K562 (cell line): ENCODE measurements at regions of chr14 and their contacts with region 1.

Region 1: DNA sequence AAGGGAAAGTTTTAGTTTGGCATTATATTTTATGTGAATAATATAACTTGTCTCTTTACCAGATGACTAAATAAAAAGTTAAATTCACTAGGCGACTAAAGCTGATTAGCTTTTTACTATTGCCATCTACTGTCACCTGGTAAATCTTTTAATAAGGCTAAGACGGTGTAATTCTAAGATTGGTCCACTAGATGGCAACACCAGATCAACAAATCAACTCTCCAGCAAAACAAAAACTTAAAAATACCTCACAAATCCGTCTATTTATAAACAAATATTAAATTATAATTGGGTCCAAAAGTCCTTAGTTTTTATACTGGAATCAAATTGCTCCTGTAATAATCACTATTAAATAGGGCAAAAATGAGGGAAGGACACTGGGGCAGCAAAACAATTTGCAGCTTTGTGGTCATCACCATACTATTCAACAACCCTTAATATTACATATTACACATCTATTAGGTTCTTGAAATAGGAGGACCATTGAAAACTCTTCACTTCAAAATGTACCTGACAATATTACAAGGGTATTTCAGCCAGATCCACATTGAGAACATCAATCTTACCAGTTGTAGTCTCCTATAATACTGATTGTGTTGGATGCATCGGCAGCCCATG is 47.9 kb downstream of the GALC start:
- DNase-seq: peak; percentile 12 to 55 (median 17)
- ATAC-seq: no peak
- H3K4me3 ChIP-seq: no peak overlapping the region
- H3K27ac ChIP-seq: no peak overlapping the region
- H3K4me1 ChIP-seq: no peaks in the 10 kb centered on the region
- H3K27me3 ChIP-seq: no peaks in the 10 kb centered on the region
- CTCF ChIP-seq: peak; percentile 26 to 66 (median 41); a peak in 3 of 6 replicates
- EP300 ChIP-seq: no peak
- POLR2A ChIP-seq: no peak
- RAD21 ChIP-seq: peak; percentile 70 to 72

Region 2: DNA sequence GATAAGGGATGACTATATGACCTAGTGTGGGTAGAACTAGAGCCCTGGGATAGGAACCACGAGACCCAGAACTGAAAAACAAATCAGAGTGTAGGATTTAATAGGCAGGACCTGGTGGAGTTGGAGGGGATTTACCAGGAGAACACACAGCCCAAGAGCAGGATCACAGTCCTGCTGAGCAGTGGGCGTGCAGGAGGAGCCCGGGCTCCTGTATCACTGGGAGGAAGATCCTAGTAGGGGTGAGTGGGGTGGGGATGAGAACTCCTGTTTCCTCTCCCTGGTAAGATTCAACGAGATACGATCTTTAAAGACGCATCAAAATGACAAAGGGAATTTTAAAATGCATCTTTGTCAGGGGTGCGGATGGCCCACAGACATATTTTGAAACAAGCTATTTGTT is 172.2 kb before region 1 on chr14:
- CTCF ChIA-PET with region 1: no interaction called
- POLR2A ChIA-PET with region 1: no interaction called
- in situ Hi-C with region 1: no loop called
- intact Hi-C with region 1: no loop called
- DNase-seq: no peak
- ATAC-seq: no peak
- H3K4me3 ChIP-seq: no peak overlapping the region
- H3K27ac ChIP-seq: no peak overlapping the region
- H3K4me1 ChIP-seq: no peaks in the 10 kb centered on the region
- H3K27me3 ChIP-seq: no peaks in the 10 kb centered on the region
- CTCF ChIP-seq: no peak
- EP300 ChIP-seq: no peak
- POLR2A ChIP-seq: no peak
- RAD21 ChIP-seq: no peak

Region 3: DNA sequence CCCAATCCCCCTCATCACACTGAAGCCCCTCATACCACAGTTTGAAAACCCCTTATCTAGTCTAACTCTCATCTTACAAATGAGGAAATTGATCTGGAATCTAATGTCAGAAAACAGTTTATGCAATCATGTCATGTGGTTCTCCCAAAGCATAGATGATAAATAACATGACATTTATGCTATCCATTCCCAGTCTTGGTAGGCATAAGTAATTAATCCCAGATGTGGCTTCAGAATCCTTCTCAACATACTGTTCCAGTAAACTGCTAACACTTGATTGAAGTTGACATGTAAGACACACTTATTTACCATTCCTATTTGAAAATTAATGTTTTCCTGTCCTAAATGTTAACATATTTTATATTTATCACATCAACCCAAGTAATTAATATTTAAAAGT is 120.8 kb before region 1 on chr14:
- CTCF ChIA-PET with region 1: no interaction called
- POLR2A ChIA-PET with region 1: no interaction called
- in situ Hi-C with region 1: no loop called
- intact Hi-C with region 1: no loop called
- DNase-seq: no peak
- ATAC-seq: no peak
- H3K4me3 ChIP-seq: no peak overlapping the region
- H3K27ac ChIP-seq: no peak overlapping the region
- H3K4me1 ChIP-seq: no peaks in the 10 kb centered on the region
- H3K27me3 ChIP-seq: no peaks in the 10 kb centered on the region
- CTCF ChIP-seq: no peak
- EP300 ChIP-seq: no peak
- POLR2A ChIP-seq: no peak
- RAD21 ChIP-seq: no peak

Region 4: DNA sequence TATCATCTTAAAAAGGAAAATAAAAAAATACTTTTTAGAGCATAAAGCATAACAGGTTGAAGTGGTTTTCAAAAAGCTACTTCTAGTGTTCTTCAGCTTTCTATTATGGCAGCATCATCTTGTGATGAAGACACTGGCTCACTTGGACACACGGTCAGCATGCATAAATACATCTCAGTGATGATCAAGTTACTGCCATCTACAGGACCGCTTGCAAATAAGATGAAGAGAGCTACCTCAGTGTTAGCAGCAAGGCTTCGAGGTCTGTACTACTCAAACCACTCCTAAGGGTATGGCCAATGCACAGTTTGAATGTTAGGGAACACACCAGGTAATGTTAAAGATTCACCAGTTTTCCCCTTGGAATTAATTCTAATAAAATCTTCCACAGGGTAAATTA is 10.9 kb before region 1 on chr14:
- CTCF ChIA-PET with region 1: no interaction called
- POLR2A ChIA-PET with region 1: no interaction called
- in situ Hi-C with region 1: no loop called
- intact Hi-C with region 1: no loop called
- DNase-seq: no peak
- ATAC-seq: peak; percentile 69; the same call in 2 of the 3 replicates
- H3K4me3 ChIP-seq: no peak overlapping the region
- H3K27ac ChIP-seq: no peak overlapping the region
- H3K4me1 ChIP-seq: no peaks in the 10 kb centered on the region
- H3K27me3 ChIP-seq: no peaks in the 10 kb centered on the region
- CTCF ChIP-seq: no peak
- EP300 ChIP-seq: no peak
- POLR2A ChIP-seq: no peak
- RAD21 ChIP-seq: no peak

Region 5: GRCh38 chr14:88023658-88024187 is 78.6 kb after region 1 on chr14:
- CTCF ChIA-PET with region 1: no interaction called
- POLR2A ChIA-PET with region 1: no interaction called
- in situ Hi-C with region 1: no loop called
- intact Hi-C with region 1: no loop called
- DNase-seq: peak in 2 of 4 experiments; percentile 7 to 21
- ATAC-seq: peak; percentile 63
- H3K4me3 ChIP-seq: no peak overlapping the region
- H3K27ac ChIP-seq: peak overlapping the region; percentile 36; the same call in 1 of the 3 replicates
- H3K4me1 ChIP-seq: peaks cover 0 to 40% of the 10 kb centered on the region in 2 experiments; a peak in 3 of 5 replicates
- H3K27me3 ChIP-seq: no peaks in the 10 kb centered on the region
- CTCF ChIP-seq: no peak
- EP300 ChIP-seq: peak; percentile 22; the same call in 1 of the 2 replicates
- POLR2A ChIP-seq: no peak
- RAD21 ChIP-seq: no peak

Region 6: DNA sequence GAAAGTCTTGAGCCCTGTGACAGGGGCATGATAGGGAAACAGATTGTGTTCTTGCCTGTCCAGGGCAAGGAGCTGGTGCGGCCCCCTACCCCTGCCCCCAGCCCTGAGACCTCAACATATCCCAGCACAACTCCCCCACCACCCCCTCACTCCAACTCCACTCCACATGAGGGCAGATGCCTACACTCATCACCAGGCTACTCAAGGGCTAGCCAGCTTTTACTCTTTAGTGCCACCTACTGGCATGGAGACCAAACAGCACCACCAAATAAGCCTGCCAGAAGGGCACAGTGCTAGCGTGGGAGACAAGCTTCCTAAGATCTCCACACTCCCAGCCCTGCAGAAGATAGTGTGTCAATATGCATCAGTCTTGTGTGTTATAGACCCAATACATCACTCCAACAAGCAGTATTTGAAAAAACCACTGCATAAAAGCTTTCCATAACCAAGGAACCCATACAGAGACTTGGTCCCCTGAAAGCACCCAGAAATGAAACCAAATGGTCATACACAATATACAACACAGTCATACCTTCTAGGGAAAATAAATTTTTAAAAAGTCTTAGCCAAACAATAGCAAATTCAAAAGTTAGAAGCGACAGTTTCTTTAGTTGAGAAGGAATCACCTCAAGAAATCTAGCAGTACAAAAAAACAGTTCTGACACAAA is 223.5 kb after region 1 on chr14:
- CTCF ChIA-PET with region 1: no interaction called
- POLR2A ChIA-PET with region 1: no interaction called
- in situ Hi-C with region 1: loop called (anchors 10 kb)
- intact Hi-C with region 1: loop called (anchors 5 kb)
- DNase-seq: peak; percentile 36 to 46 (median 40)
- ATAC-seq: peak; percentile 90
- H3K4me3 ChIP-seq: no peak overlapping the region
- H3K27ac ChIP-seq: no peak overlapping the region
- H3K4me1 ChIP-seq: no peaks in the 10 kb centered on the region
- H3K27me3 ChIP-seq: no peaks in the 10 kb centered on the region
- CTCF ChIP-seq: peak; percentile 57 to 67 (median 60)
- EP300 ChIP-seq: no peak
- POLR2A ChIP-seq: no peak
- RAD21 ChIP-seq: peak in 1 of 2 experiments; percentile 56; a peak in 3 of 4 replicates

Region 7: GRCh38 chr14:88179716-88180115 is 234.6 kb after region 1 on chr14:
- CTCF ChIA-PET with region 1: no interaction called
- POLR2A ChIA-PET with region 1: no interaction called
- in situ Hi-C with region 1: loop called (anchors 10 kb)
- intact Hi-C with region 1: no loop called
- DNase-seq: no peak
- ATAC-seq: no peak
- H3K4me3 ChIP-seq: no peak overlapping the region
- H3K27ac ChIP-seq: no peak overlapping the region
- H3K4me1 ChIP-seq: no peaks in the 10 kb centered on the region
- H3K27me3 ChIP-seq: no peaks in the 10 kb centered on the region; a peak in 1 of 5 replicates
- CTCF ChIP-seq: no peak
- EP300 ChIP-seq: no peak
- POLR2A ChIP-seq: no peak
- RAD21 ChIP-seq: no peak

Region 8: GRCh38 chr14:88233915-88234314 is 288.8 kb after region 1 on chr14:
- CTCF ChIA-PET with region 1: interaction called, 7 read pairs
- POLR2A ChIA-PET with region 1: no interaction called
- in situ Hi-C with region 1: no loop called
- intact Hi-C with region 1: loop called (anchors 5 kb)
- DNase-seq: peak; percentile 6 to 32 (median 12)
- ATAC-seq: peak; percentile 69
- H3K4me3 ChIP-seq: no peak overlapping the region
- H3K27ac ChIP-seq: no peak overlapping the region
- H3K4me1 ChIP-seq: no peaks in the 10 kb centered on the region
- H3K27me3 ChIP-seq: no peaks in the 10 kb centered on the region
- CTCF ChIP-seq: peak; percentile 43 to 53 (median 48); a peak in 4 of 6 replicates
- EP300 ChIP-seq: no peak
- POLR2A ChIP-seq: no peak
- RAD21 ChIP-seq: peak; percentile 39 to 46